H1 (cell line): ENCODE measurements at regions of chr1 and their contacts with region 1.

Region 1: GRCh38 chr1:26677306-26678115 is 18.3 kb upstream of the ARID1A start:
- DNase-seq: peak in 1 of 2 experiments; percentile 58
- H3K4me3 ChIP-seq: no peak overlapping the region
- H3K27ac ChIP-seq: no peak overlapping the region
- H3K4me1 ChIP-seq: peaks cover 0 to 3% (median 0%) of the 10 kb centered on the region in 4 experiments; a peak in 1 of 7 replicates
- H3K27me3 ChIP-seq: peaks cover 0 to 2% (median 0%) of the 10 kb centered on the region in 4 experiments; a peak in 1 of 7 replicates
- CTCF ChIP-seq: peak; percentile 40 to 88 (median 71)
- EP300 ChIP-seq: no peak
- POLR2A ChIP-seq: no peak
- RAD21 ChIP-seq: peak; percentile 68 to 77

Region 2: DNA sequence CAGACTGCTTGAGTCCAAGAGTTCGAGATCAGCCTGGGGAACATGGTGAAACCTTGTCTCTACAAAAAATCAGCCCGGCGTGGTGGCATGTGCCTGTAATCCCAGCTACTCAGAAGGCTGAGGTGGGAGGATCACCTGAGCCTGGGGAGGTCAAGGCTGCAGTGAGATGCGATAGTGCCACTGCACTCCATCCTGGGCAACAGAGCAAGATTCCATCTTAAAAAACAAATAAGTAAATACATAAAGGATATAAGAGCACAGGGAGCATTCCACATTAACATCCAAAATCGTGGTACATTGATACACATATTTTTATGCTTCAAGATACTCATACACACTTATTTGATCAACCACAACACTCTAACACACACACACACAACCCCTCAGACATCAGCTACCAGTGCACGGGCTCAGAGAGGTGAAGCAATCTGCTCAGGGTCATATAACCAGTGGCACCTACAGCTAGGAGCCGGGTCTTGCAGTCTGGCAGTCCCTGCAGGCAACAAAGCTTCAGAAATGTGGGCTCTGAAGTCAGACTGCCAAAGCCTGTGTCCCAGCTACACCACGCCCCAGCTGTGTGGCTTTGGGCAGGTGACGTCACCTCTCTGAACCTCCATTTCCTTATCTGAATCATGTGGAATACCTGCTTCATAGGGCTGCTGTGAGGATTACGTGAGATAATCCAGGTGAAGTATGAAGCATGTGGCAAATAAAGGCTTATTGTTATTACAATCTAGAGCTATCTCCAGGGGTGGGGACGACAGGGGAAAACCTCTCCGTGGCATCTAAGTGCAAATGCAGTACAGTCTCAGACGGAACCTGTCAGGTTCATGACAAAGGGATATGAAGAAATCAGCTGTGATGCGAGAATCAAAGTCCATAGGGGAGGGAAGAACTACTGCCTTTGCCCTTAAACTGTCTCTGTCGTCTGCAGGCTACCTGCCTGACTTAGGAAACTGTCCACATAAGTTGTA is 318.8 kb before region 1 on chr1:
- CTCF ChIA-PET with region 1: no interaction called
- POLR2A ChIA-PET with region 1: no interaction called
- DNase-seq: no peak
- H3K4me3 ChIP-seq: peak overlapping the region in 2 of 4 experiments; percentile 67 to 92; a peak in 3 of 8 replicates
- H3K27ac ChIP-seq: no peak overlapping the region
- H3K4me1 ChIP-seq: peaks cover 6 to 24% (median 19%) of the 10 kb centered on the region in 4 experiments
- H3K27me3 ChIP-seq: peaks cover 0 to 10% (median 10%) of the 10 kb centered on the region in 4 experiments; a peak in 4 of 7 replicates
- CTCF ChIP-seq: no peak
- EP300 ChIP-seq: no peak
- POLR2A ChIP-seq: no peak
- RAD21 ChIP-seq: no peak

Region 3: GRCh38 chr1:26666855-26667254 is 10.7 kb before region 1 on chr1:
- CTCF ChIA-PET with region 1: interaction called, 21 read pairs
- POLR2A ChIA-PET with region 1: interaction called, 5 read pairs
- DNase-seq: no peak
- H3K4me3 ChIP-seq: no peak overlapping the region
- H3K27ac ChIP-seq: no peak overlapping the region
- H3K4me1 ChIP-seq: no peaks in the 10 kb centered on the region
- H3K27me3 ChIP-seq: no peaks in the 10 kb centered on the region
- CTCF ChIP-seq: no peak
- EP300 ChIP-seq: no peak
- POLR2A ChIP-seq: no peak
- RAD21 ChIP-seq: no peak

Region 4: DNA sequence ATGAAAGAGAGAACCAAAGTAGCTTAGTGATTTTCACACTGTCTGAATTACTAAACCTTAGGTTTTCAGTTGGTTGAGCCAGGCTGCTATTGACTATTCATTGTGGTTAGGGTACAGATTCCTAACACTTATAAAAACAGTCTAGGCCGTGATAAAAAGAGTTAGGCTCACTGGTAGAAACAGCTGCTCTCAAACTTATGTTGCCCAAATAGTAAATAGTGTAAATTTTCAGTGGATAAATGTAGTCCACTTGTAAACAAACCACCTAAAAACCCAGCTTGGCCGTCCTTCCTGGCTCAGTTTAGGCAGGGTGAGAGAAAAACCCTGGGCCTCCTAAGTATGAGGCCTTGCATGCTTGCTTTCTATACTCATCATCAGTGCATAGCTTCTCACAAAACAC is 53.2 kb after region 1 on chr1:
- CTCF ChIA-PET with region 1: interaction called, 14 read pairs
- POLR2A ChIA-PET with region 1: interaction called, 3 read pairs
- DNase-seq: no peak
- H3K4me3 ChIP-seq: no peak overlapping the region
- H3K27ac ChIP-seq: no peak overlapping the region
- H3K4me1 ChIP-seq: peaks cover 7 to 21% (median 14%) of the 10 kb centered on the region in 4 experiments; a peak in 6 of 7 replicates
- H3K27me3 ChIP-seq: no peaks in the 10 kb centered on the region
- CTCF ChIP-seq: no peak
- EP300 ChIP-seq: no peak
- POLR2A ChIP-seq: no peak
- RAD21 ChIP-seq: no peak